HCT116 (cell line): ENCODE measurements at regions of chr7 and their contacts with region 1.

Region 1: GRCh38 chr7:144127703-144128334 is 4.8 kb downstream of the OR2A14 start:
- DNase-seq: peak; percentile 85
- ATAC-seq: peak; percentile 99
- H3K4me3 ChIP-seq: no peak overlapping the region
- H3K27ac ChIP-seq: no peak overlapping the region
- H3K4me1 ChIP-seq: no peaks in the 10 kb centered on the region
- H3K27me3 ChIP-seq: no peaks in the 10 kb centered on the region
- CTCF ChIP-seq: peak; percentile 83 to 91 (median 87)
- POLR2A ChIP-seq: no peak
- RAD21 ChIP-seq: peak; percentile 90

Region 2: DNA sequence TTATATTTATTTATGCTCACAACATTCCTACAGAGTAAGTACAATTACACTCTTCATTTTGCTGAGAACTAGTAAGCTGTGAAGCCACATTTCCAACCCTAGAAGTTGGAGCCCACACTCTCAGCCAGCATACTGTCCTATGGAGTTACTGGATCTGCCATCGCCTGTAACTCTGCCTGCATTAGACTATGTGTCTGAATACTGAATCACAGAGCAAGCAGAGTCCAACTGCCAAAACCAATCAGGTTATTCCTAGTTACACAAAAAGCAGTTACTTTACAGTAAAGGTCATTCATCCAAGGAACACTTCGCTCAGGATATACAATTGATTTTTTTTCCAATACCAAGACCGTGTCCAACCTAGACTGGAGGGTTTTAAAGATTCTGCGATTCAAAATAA is 391.9 kb before region 1 on chr7:
- CTCF ChIA-PET with region 1: interaction called, 21 read pairs
- POLR2A ChIA-PET with region 1: no interaction called
- RAD21 ChIA-PET with region 1: interaction called in 1 of 2 experiments, 3 read pairs
- intact Hi-C with region 1: no loop called
- DNase-seq: no peak
- ATAC-seq: no peak
- H3K4me3 ChIP-seq: no peak overlapping the region
- H3K27ac ChIP-seq: no peak overlapping the region
- H3K4me1 ChIP-seq: 0 out of 4 replicates have a peak, but pooled peaks cover 0 to 4% of the 10 kb centered on the region in 2 experiments
- H3K27me3 ChIP-seq: no peaks in the 10 kb centered on the region
- CTCF ChIP-seq: no peak
- POLR2A ChIP-seq: no peak
- RAD21 ChIP-seq: no peak

Region 3: GRCh38 chr7:143901668-143902331 is 226.0 kb before region 1 on chr7 and contains the start of gene TCAF1:
- CTCF ChIA-PET with region 1: interaction called, 8 read pairs
- POLR2A ChIA-PET with region 1: no interaction called
- RAD21 ChIA-PET with region 1: no interaction called
- intact Hi-C with region 1: loop called (anchors 5 kb)
- DNase-seq: peak; percentile 91
- ATAC-seq: peak; percentile 93
- H3K4me3 ChIP-seq: peak within 1 kb of the TSS; percentile 86 to 91
- H3K27ac ChIP-seq: peak within 1 kb of the TSS; percentile 83
- H3K4me1 ChIP-seq: peaks cover 8 to 18% of the 10 kb centered on the region in 2 experiments
- H3K27me3 ChIP-seq: no peaks in the 10 kb centered on the region
- CTCF ChIP-seq: peak; percentile 21 to 42 (median 36); a peak in 4 of 6 replicates
- POLR2A ChIP-seq: peak; percentile 23
- RAD21 ChIP-seq: peak; percentile 34; the same call in 1 of the 2 replicates
- total RNA-seq, gene TCAF1: 58.4 TPM

Region 4: GRCh38 chr7:144027070-144027469 is 100.7 kb before region 1 on chr7:
- CTCF ChIA-PET with region 1: interaction called, 8 read pairs
- POLR2A ChIA-PET with region 1: no interaction called
- RAD21 ChIA-PET with region 1: no interaction called
- intact Hi-C with region 1: loop called (anchors 5 kb)
- DNase-seq: peak; percentile 28
- ATAC-seq: peak; percentile 70
- H3K4me3 ChIP-seq: no peak overlapping the region
- H3K27ac ChIP-seq: no peak overlapping the region
- H3K4me1 ChIP-seq: peaks cover 0 to 6% of the 10 kb centered on the region in 2 experiments; a peak in 2 of 4 replicates
- H3K27me3 ChIP-seq: no peaks in the 10 kb centered on the region
- CTCF ChIP-seq: peak; percentile 32 to 72 (median 59); a peak in 4 of 6 replicates
- POLR2A ChIP-seq: no peak
- RAD21 ChIP-seq: peak; percentile 85

Region 5: DNA sequence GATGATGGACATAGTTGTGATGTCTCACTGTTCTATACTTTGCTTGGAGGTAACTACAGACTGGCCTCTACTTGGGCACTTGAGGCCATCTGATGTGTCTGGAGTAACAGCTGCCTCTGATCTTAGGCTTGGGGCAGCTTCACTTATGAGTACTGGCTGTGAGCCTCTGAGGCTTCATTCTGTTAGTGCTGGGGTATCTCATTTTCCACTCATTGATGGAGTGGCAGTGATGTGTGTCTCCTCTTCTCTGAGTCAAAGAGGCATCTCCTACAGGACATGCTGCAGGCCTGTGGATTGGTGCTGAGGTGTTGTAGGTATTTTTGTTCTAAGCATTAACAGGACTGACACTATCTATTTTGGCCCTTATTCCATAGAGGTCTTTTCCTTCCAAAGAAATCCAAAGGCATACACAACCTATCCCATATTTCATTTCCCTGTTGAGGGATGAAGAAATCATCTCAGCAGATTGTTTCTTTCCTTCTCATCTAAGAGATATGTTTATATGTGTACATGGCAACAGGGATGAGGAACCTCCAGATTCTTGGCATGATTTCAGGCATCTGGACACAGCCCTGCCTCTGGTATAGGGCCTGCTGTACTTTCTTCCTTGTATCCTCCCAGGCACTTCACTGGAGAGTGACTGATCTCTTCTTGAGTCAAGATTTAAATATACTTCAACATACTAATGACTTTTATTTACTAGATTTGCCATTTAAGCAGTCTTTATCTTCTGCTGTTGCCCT is 341.3 kb after region 1 on chr7:
- CTCF ChIA-PET with region 1: no interaction called
- POLR2A ChIA-PET with region 1: no interaction called
- RAD21 ChIA-PET with region 1: no interaction called
- intact Hi-C with region 1: no loop called
- DNase-seq: no peak
- ATAC-seq: no peak
- H3K4me3 ChIP-seq: no peak overlapping the region
- H3K27ac ChIP-seq: no peak overlapping the region
- H3K4me1 ChIP-seq: no peaks in the 10 kb centered on the region
- H3K27me3 ChIP-seq: no peaks in the 10 kb centered on the region
- CTCF ChIP-seq: no peak
- POLR2A ChIP-seq: no peak
- RAD21 ChIP-seq: no peak